ENCODE measurements at regions of chr15 and their contacts with region 1.

Region 1: DNA sequence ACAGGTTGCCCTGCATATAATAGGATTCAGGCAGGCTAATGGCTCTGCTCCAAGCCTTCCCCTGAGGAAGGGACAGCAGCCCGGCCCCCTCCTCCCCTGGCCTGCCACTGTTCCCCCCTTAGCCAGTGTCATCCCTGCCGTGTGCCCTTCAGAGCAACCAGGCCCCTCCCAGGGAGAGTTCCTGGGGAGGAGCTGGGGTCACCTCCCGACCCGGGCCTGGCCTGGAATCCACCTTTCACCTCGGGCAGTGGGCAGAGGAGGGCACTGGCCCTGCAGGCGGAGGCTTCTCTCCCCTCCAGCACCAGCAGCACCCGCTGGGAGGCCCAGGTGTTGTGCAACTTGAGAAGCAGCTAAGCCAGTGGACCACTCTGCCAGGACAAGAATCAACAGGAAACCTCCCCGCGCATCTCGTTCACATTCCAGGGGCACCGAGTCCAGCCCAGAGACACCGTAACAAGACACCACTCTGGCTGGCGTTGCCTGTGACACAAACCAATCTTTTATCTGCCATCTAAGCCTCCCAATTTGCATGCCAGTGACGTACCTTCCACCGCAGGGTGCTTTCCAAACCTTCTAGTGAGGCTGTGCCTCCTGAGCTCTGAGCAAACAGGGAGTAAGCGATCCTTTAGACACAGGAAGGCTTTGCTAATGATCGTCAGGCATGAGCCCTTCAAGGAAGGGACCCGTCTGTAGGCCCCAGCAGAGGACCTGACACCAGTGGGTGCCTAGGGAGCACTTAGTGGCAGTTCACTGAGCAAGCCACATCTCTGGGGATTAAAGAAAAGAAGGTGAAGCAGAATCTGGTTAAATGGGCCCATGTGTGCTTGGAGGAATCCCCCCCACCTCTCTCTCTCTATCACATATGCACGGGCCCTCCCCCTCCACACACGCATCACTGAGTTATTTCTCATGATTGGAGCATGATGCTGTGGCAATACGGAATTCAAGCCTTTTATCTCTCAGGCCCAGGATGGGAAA is 98.9 kb upstream of the TLE3 start:
- DNase-seq: peak; percentile 96 to 98
- H3K4me3 ChIP-seq: peak overlapping the region; percentile 7; the same call in 1 of the 2 replicates
- H3K27ac ChIP-seq: peak overlapping the region; percentile 85
- H3K4me1 ChIP-seq: peaks cover 53% of the 10 kb centered on the region
- H3K27me3 ChIP-seq: no peaks in the 10 kb centered on the region
- CTCF ChIP-seq: no peak

Region 2: GRCh38 chr15:69853581-69853980 is 343.0 kb before region 1 on chr15:
- CTCF ChIA-PET with region 1: no interaction called
- POLR2A ChIA-PET with region 1: no interaction called
- intact Hi-C with region 1: loop called (anchors 5 kb)
- DNase-seq: peak; percentile 85 to 92
- H3K4me3 ChIP-seq: no peak overlapping the region
- H3K27ac ChIP-seq: peak overlapping the region; percentile 91
- H3K4me1 ChIP-seq: peaks cover 38% of the 10 kb centered on the region
- H3K27me3 ChIP-seq: no peaks in the 10 kb centered on the region
- CTCF ChIP-seq: no peak

Region 3: GRCh38 chr15:70289203-70289955 is 92.8 kb after region 1 on chr15:
- CTCF ChIA-PET with region 1: no interaction called
- POLR2A ChIA-PET with region 1: no interaction called
- intact Hi-C with region 1: loop called (anchors 1 kb)
- DNase-seq: peak; percentile 86 to 90
- H3K4me3 ChIP-seq: no peak overlapping the region
- H3K27ac ChIP-seq: peak overlapping the region; percentile 61
- H3K4me1 ChIP-seq: peaks cover 39% of the 10 kb centered on the region
- H3K27me3 ChIP-seq: no peaks in the 10 kb centered on the region
- CTCF ChIP-seq: no peak

Region 4: GRCh38 chr15:70436428-70436827 is 239.8 kb after region 1 on chr15:
- CTCF ChIA-PET with region 1: interaction called, 15 read pairs
- POLR2A ChIA-PET with region 1: no interaction called
- intact Hi-C with region 1: no loop called
- DNase-seq: no peak
- H3K4me3 ChIP-seq: no peak overlapping the region
- H3K27ac ChIP-seq: no peak overlapping the region
- H3K4me1 ChIP-seq: peaks cover 65% of the 10 kb centered on the region
- H3K27me3 ChIP-seq: no peaks in the 10 kb centered on the region
- CTCF ChIP-seq: no peak

Region 5: DNA sequence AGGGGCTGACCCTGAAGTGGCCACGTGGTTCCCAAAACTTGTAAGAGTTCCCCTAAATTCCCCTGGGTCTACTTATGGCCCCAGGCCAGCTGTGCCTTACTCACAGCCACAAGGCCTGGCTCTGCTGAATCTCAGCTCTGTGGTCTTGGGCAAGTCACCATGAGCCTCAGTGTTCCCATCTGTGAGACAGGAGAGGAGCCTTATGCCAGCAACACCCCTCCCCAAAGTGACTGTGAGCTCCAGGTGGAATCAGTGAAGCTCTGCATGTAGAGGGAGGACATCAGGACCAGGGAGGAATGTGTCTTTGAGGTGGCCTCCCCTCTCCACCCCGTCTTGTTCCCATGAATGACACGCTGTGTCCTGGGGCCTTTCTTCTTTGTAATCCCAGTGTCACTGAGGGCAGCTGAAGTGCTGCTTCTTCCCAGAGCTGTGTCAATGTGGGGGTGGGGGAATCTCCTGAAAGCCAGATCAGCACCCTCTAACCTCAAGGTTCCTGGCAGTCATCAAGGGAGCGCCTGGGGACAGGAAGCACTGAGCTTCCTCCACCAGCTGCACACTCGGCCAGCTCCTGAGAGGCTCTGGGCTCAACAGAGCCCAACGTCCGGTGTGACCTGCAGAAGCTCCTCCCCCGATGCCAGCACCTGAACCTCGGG is 307.8 kb after region 1 on chr15:
- CTCF ChIA-PET with region 1: no interaction called
- POLR2A ChIA-PET with region 1: interaction called, 5 read pairs
- intact Hi-C with region 1: loop called (anchors 5 kb)
- DNase-seq: peak; percentile 72 to 86
- H3K4me3 ChIP-seq: no peak overlapping the region
- H3K27ac ChIP-seq: peak overlapping the region; percentile 99
- H3K4me1 ChIP-seq: peaks cover 59% of the 10 kb centered on the region
- H3K27me3 ChIP-seq: no peaks in the 10 kb centered on the region
- CTCF ChIP-seq: no peak